ENCODE measurements at regions of chr7 and their contacts with region 1.

Region 1: DNA sequence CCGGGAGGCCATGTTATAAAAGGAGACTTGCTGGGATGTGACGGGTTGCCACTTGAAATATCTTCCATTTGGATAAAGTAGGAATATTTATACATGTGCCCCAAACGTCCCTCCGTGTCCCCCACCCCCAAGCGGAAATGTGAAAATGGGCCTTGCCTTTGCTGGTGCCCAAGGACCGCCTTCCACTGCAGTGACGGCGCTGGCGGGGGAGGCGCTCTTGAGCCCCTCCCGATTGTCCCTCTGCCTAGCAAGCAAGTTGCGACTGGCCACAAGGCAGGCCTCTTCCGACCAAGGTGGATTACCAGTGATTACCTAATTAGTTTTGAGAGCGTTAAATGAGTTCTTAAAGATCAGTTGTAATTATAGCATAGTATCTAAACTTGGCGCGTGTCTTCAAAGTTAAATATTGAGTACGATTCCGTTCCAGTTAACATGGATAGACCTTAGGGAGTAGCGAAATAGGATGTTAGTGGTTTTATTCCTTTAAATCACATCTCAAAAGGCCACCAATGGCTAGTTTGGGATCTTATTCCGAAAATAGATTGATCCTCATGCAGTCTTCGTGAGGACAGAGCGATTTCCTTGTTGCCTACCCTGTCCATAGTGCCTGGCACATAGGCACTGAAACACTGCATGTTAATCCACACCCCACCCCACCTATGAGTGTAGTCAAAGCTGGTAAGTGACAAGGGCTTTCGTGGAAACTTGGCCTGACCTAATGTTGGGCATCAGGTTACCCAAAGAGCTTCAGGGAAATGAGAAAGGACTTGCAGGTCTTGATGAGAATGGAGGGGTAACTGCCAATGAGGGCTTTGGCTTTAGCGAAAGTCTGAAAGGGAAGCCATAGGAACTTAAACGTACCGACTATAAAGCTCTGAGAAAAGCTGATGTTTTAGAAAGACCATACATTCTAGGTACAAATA is 1.1 kb downstream of the PPIA start:
- DNase-seq: peak; percentile 87
- ATAC-seq: peak; percentile 49
- H3K4me3 ChIP-seq: peak overlapping the region; percentile 77 to 98 (median 93)
- H3K4me3 Mint-ChIP-seq: peak overlapping the region; percentile 93
- H3K27ac ChIP-seq: peak overlapping the region; percentile 92 to 97
- H3K27ac Mint-ChIP-seq: peak overlapping the region; percentile 98
- H3K4me1 ChIP-seq: peaks cover 15 to 26% of the 10 kb centered on the region in 2 donors
- H3K4me1 Mint-ChIP-seq: peaks cover 40% of the 10 kb centered on the region
- H3K27me3 ChIP-seq: no peaks in the 10 kb centered on the region
- H3K27me3 Mint-ChIP-seq: no peaks in the 10 kb centered on the region
- CTCF ChIP-seq: peak; percentile 73

Region 2: DNA sequence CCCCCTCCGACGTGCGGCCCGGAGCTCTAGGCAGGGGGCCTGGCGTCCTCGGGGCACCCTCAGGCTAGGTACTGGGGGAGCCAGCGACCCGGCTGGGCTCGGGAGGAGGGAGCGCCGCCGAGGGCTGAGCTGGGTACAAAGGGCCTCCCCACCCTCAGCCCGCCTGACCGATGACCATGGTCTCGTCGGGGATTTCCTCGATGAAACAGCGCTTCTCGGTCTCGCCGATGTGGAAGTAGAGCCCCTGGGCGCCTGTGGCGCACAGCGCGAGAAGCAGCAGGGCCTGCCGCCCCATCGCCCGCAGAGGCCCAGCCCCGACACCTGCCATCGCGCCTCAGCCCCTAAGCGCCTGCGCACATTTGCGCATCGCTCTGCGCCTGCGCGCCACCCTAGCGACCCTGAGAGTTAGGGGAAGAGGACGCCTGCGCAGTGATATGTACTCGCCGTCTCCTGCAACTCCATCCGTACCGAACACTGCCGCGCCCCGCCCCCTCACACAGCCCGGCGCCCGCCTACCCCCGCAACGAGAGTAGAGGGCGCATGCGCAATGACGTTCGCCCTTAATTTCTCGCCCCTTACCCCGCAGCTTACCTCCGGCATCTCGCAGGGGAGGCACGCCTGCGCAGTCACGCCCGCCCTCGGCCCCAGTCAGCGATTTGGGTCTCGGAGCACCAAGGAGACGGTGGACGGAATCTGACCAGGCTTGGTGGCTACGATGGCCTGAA is 215.5 kb before region 1 on chr7 and contains the start of gene TMED4:
- CTCF ChIA-PET with region 1: no interaction called
- POLR2A ChIA-PET with region 1: no interaction called
- intact Hi-C with region 1: loop called (anchors 1 kb)
- DNase-seq: peak; percentile 100
- ATAC-seq: peak; percentile 92
- H3K4me3 ChIP-seq: peak within 1 kb of the TSS; percentile 72 to 99 (median 88)
- H3K4me3 Mint-ChIP-seq: peak within 1 kb of the TSS; percentile 96
- H3K27ac ChIP-seq: peak within 1 kb of the TSS; percentile 92 to 97
- H3K27ac Mint-ChIP-seq: peak within 1 kb of the TSS; percentile 99
- H3K4me1 ChIP-seq: peaks cover 21% of the 10 kb centered on the region in 2 donors
- H3K4me1 Mint-ChIP-seq: peaks cover 28% of the 10 kb centered on the region
- H3K27me3 ChIP-seq: no peaks in the 10 kb centered on the region
- H3K27me3 Mint-ChIP-seq: no peaks in the 10 kb centered on the region
- CTCF ChIP-seq: no peak
- total RNA-seq, gene TMED4: 84.0 and 84.1 TPM in 2 replicates

Region 3: DNA sequence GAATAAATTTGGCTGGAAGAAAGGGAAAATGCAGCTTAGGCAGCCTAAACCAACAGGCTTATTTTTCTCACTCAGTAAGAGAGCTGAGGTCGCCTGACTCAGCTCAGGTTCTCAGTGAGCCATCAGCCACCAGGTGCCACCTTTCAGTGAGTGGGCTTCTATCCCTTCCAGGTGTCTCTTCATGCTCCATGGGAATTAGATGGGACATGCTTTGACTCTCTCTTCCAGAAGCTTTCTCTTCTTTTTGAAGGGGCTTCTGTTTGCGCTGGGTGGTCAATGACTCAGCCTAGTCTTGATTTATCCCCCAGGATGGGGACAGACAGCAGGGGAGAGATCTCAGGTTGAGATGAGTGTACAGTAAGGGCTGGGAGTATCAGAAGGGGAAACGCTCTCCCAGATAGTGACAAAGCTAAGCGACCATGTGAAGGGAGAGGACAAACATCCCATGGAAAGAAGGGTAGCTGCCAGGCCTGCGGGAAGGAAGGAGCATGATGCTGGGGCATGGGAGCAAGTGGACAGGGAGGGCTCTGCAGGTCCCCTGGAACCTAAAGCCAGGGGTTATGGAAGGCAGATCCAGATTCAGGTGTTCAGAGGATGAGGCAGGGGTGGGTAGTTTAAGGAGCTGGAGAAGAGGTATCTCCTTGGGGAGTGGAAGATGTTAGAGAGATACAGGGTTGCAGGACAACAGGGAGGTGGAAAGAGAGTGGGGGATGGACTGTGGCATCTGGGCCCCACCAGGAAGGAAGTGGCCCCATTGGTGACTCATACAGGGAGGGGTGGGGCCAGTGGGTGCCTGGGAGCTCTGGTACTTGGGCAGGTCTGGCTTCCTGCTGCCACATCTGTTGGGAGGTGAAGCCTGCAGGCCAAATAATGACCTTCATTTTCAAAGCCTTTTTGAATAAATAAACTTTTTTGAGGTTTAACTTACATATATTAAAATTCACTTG is 158.7 kb before region 1 on chr7:
- CTCF ChIA-PET with region 1: no interaction called
- POLR2A ChIA-PET with region 1: no interaction called
- intact Hi-C with region 1: loop called (anchors 2 kb)
- DNase-seq: peak; percentile 72
- ATAC-seq: peak; percentile 87
- H3K4me3 ChIP-seq: peak overlapping the region in 1 of 5 experiments; percentile 31
- H3K4me3 Mint-ChIP-seq: peak overlapping the region; percentile 84
- H3K27ac ChIP-seq: peak overlapping the region; percentile 83 to 93
- H3K27ac Mint-ChIP-seq: peak overlapping the region; percentile 99
- H3K4me1 ChIP-seq: peaks cover 44 to 69% of the 10 kb centered on the region in 2 donors
- H3K4me1 Mint-ChIP-seq: peaks cover 59% of the 10 kb centered on the region
- H3K27me3 ChIP-seq: no peaks in the 10 kb centered on the region
- H3K27me3 Mint-ChIP-seq: no peaks in the 10 kb centered on the region
- CTCF ChIP-seq: no peak

Region 4: DNA sequence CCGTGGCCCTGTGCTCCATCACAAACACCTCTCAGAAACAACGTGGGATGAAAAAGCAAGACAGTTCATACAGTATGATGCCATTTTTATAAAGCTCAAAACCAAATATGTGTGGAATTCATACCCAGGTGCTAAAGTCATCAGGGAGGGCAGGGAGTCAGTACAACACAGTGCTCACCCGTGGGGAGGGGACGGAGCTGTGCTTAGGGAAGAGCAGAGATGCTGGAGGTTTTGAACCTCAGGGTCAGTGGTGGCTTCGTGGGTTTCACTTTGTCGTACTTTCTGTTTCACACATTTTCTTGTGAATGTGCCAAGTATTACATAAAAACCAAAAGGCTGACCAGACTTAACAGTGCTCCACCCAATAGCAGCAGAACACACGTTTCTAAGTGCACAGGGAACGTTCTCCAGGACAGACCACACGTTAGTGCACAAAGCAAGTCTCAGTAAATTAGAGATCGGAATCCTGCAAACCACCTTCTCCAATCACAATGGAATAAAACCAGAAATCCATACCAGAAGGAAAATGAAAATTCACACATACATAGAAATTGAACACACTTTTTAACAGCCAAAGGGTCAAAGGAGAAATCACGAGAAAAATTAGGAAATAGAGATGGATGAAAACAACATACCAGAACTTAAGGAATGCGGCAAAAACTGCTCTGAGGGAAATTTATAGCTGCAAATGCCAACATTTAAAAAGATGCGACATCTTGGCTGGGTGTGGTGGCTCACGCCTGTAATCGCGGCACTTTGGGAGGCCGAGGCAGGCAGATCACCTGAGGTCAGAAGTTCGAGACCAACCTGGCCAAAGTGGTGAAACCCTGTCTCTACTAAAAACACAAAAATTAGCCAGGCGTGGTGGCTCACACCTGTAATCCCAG is 27.6 kb before region 1 on chr7:
- CTCF ChIA-PET with region 1: interaction called, 14 read pairs
- POLR2A ChIA-PET with region 1: interaction called, 6 read pairs
- intact Hi-C with region 1: loop called (anchors 1 kb)
- DNase-seq: peak; percentile 49
- ATAC-seq: peak; percentile 26
- H3K4me3 ChIP-seq: peak overlapping the region in 1 of 5 experiments; percentile 7
- H3K4me3 Mint-ChIP-seq: peak overlapping the region; percentile 51
- H3K27ac ChIP-seq: peak overlapping the region; percentile 73 to 77
- H3K27ac Mint-ChIP-seq: peak overlapping the region; percentile 97
- H3K4me1 ChIP-seq: peaks cover 31 to 62% of the 10 kb centered on the region in 2 donors
- H3K4me1 Mint-ChIP-seq: peaks cover 55% of the 10 kb centered on the region
- H3K27me3 ChIP-seq: no peaks in the 10 kb centered on the region
- H3K27me3 Mint-ChIP-seq: no peaks in the 10 kb centered on the region
- CTCF ChIP-seq: no peak

Region 5: DNA sequence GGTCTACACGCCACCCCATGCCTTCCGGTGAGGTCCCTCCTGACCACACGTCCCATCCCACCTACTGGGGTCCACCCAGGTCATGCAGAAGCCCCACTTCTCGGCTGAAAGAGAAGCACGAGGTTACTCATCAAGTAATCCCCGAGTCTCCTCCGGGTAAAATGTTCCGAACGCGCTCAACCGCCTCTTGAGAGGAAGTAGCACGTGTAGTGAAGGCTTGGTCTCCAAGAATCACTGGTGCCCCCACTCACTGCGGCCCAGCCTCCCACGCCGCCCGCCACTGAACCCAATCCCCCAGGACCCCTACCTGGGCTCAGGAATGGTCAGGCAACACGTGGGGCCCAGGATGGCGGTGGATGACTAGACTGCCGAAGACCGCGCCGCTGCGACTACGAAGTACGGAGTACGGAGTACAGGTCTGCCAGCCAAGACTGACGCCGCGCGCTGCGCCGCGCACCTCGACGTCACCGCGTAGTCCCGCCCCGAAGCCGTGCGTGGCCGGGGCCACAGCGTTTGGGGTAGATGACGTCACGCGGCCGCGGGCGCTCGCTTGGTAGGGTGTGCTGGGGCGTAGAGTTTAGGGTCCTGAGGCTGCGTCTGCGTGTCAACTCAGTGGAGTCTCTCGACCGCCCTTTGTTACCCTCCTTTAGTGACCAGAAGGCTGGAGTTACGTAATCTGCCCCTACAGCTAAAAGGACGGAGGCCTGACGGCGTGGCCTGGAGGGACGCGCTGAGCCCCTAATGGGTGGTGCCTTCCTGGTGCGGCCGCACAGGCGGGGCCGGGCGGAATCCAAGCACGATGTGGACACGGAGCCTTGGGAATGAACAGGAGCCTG is 188.8 kb after region 1 on chr7:
- CTCF ChIA-PET with region 1: no interaction called
- POLR2A ChIA-PET with region 1: no interaction called
- intact Hi-C with region 1: loop called (anchors 2 kb)
- DNase-seq: peak; percentile 98
- ATAC-seq: peak; percentile 94
- H3K4me3 ChIP-seq: peak overlapping the region; percentile 62 to 92 (median 73)
- H3K4me3 Mint-ChIP-seq: peak overlapping the region; percentile 98
- H3K27ac ChIP-seq: peak overlapping the region; percentile 97 to 98
- H3K27ac Mint-ChIP-seq: peak overlapping the region; percentile 98
- H3K4me1 ChIP-seq: peaks cover 29 to 39% of the 10 kb centered on the region in 2 donors
- H3K4me1 Mint-ChIP-seq: peaks cover 51% of the 10 kb centered on the region
- H3K27me3 ChIP-seq: no peaks in the 10 kb centered on the region
- H3K27me3 Mint-ChIP-seq: no peaks in the 10 kb centered on the region
- CTCF ChIP-seq: no peak

Region 6: DNA sequence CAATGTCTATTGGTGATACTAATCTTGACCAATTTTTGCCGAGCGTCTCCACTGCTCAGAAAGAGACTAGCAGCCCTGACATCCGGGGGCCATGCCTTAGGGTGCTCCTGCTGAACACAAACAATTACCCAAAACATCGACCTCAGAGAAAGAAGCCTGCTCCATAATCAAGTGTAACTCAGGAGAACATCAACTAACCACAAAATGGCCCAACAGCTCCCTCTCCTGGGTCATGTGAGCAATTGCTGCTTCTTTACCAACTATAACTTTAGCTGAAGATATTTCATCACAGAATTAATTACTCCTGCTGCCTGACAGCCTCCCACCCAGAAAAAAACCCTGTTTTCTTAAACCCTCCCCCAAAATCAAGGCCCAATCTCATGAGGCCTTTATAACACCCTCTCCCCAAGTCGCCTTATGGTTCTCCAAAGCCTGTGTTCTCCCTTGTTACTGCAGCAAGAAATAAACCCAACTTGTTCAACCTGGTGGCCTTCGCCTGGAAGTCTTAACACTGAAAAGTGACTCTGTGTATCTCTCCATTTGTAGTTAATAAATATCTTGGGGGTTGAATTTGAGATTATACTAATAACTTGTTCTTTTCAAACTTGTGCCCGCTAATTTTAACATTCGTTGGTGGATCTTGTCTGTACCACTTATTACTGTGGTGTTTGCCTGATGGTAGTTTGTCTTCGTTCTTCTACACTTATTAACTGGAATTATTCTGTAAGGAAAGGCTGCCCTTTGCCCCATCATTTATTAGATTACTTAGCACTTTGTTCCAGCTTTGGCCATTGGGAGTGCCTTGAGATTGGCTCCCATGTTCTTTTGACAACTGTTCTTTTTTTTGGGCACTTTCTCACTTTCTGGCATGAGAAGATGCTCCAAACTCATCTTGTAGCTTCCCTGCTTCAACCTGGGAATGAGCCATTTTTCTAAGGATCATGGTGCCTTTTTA is 338.8 kb after region 1 on chr7:
- CTCF ChIA-PET with region 1: interaction called, 6 read pairs
- POLR2A ChIA-PET with region 1: no interaction called
- intact Hi-C with region 1: loop called (anchors 1 kb)
- DNase-seq: peak; percentile 80
- ATAC-seq: peak; percentile 97
- H3K4me3 ChIP-seq: no peak overlapping the region
- H3K4me3 Mint-ChIP-seq: no peak overlapping the region
- H3K27ac ChIP-seq: no peak overlapping the region
- H3K27ac Mint-ChIP-seq: no peak overlapping the region
- H3K4me1 ChIP-seq: peaks cover 5 to 18% of the 10 kb centered on the region in 2 donors
- H3K4me1 Mint-ChIP-seq: peaks cover 17% of the 10 kb centered on the region
- H3K27me3 ChIP-seq: peaks cover 0 to 3% (median 0%) of the 10 kb centered on the region in 4 experiments
- H3K27me3 Mint-ChIP-seq: no peaks in the 10 kb centered on the region
- CTCF ChIP-seq: peak; percentile 91

Measured in B cell (primary cell).